CD4-positive, alpha-beta memory T cell (primary cell): ENCODE measurements at regions of chr9 and their contacts with region 1.

Region 1: GRCh38 chr9:83980395-83981125 is at the start of gene RMI1:
- DNase-seq: peak; percentile 98 to 99 (median 99)
- H3K4me3 ChIP-seq: peak within 1 kb of the TSS; percentile 90 to 99
- H3K4me3 Mint-ChIP-seq: peak within 1 kb of the TSS; percentile 94 to 100 (median 100)
- H3K27ac ChIP-seq: peak within 1 kb of the TSS; percentile 98
- H3K27ac Mint-ChIP-seq: peak within 1 kb of the TSS; percentile 98 to 100 (median 99)
- H3K4me1 ChIP-seq: peaks cover 40% of the 10 kb centered on the region
- H3K4me1 Mint-ChIP-seq: peaks cover 25 to 68% (median 36%) of the 10 kb centered on the region in 4 donors
- H3K27me3 ChIP-seq: no peaks in the 10 kb centered on the region
- H3K27me3 Mint-ChIP-seq: no peaks in the 10 kb centered on the region
- total RNA-seq, gene RMI1: 6.7 to 7.3 TPM

Region 2: DNA sequence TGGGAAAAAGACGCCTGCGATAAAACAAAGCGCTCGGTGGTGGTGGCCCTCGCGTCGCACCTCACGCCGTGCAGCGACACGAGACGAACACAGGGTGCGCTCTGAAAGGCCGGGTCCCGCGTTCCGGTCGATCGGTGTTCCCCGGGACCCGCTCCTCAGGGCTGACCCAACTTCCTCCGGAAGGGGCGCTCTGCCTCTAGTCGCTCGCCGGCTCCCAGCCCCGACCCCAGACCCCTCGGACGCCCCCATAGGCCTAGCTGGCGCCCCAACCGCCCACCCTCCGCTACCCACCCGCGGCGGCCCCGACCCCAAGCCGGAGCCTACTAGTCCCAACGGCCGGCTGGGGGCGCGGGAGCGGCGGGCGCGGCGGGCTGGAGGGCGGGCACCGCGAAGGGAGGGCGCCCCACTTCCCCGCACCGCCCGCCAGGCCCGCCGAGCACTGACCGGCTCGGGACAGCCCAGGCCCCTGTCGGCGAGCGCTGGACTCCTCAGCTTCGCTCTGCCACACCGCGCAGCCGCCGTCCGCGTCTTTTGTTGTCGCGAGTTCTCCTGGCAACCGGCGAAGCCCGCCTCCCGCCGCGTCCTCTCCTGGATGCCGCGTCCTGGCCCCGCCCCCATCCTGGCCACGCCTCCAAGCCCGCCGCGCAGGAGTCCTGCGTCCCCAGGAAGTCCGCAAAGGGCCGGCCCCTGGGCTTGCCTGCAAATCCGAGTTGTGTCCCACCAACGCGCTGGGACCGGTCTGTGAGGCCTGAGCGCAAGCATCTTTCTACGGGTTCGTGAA is 59.4 kb before region 1 on chr9 and contains the start of gene KIF27:
- CTCF ChIA-PET with region 1: interaction called, 6 read pairs
- POLR2A ChIA-PET with region 1: interaction called, 64 read pairs
- intact Hi-C with region 1: loop called (anchors 1 kb)
- DNase-seq: peak; percentile 93 to 95 (median 94)
- H3K4me3 ChIP-seq: peak within 1 kb of the TSS; percentile 20 to 67
- H3K4me3 Mint-ChIP-seq: peak within 1 kb of the TSS; percentile 90 to 95 (median 92)
- H3K27ac ChIP-seq: peak within 1 kb of the TSS; percentile 83
- H3K27ac Mint-ChIP-seq: peak within 1 kb of the TSS; percentile 84 to 98 (median 97)
- H3K4me1 ChIP-seq: peaks cover 11% of the 10 kb centered on the region
- H3K4me1 Mint-ChIP-seq: peaks cover 8 to 18% (median 10%) of the 10 kb centered on the region in 4 donors
- H3K27me3 ChIP-seq: no peaks in the 10 kb centered on the region
- H3K27me3 Mint-ChIP-seq: no peaks in the 10 kb centered on the region
- total RNA-seq, gene KIF27: 4.7 to 5.2 TPM

Region 3: GRCh38 chr9:83965350-83966208 is 15.0 kb before region 1 on chr9:
- CTCF ChIA-PET with region 1: interaction called, 8 read pairs
- POLR2A ChIA-PET with region 1: interaction called, 53 read pairs
- intact Hi-C with region 1: loop called (anchors 1 kb)
- DNase-seq: no peak
- H3K4me3 ChIP-seq: no peak overlapping the region
- H3K4me3 Mint-ChIP-seq: no peak overlapping the region
- H3K27ac ChIP-seq: no peak overlapping the region
- H3K27ac Mint-ChIP-seq: peak overlapping the region in 5 of 7 donors; percentile 4 to 84 (median 78)
- H3K4me1 ChIP-seq: peaks cover 4% of the 10 kb centered on the region
- H3K4me1 Mint-ChIP-seq: peaks cover 11 to 15% (median 14%) of the 10 kb centered on the region in 4 donors
- H3K27me3 ChIP-seq: no peaks in the 10 kb centered on the region
- H3K27me3 Mint-ChIP-seq: no peaks in the 10 kb centered on the region

Region 4: DNA sequence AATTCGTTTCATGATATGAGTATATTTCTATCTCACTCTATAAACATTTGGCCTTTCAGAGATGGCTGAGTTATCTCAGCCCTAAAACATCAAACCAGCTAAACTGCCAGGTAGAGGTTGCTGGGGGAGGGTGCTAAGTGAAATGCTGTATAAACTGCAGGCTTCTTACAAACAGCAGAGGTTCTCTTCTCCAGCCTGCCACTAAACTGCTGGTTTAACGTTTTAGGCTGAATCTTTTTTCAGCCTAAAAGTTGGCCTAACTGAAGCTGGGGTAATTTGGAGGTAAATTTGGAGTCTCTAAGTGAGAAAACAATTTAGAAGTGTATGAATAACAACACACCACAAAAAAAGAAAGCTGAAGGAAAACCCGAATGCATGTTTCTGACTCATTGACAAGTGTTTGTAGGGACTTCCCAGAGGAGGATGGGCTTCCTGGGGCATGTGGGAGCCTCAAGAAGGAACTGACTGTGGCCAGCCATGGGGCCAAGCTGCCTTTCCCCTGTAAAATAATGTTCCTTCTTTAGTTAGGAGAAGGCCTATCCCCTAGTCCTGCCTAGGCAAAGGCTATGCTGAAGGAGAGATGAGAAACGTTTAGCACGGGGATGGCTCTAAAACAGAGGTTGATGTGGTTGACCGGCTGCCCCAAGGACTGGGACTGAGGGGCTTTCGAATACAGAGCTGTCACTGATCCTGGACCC is 315.7 kb after region 1 on chr9:
- CTCF ChIA-PET with region 1: no interaction called
- POLR2A ChIA-PET with region 1: interaction called, 12 read pairs
- intact Hi-C with region 1: no loop called
- DNase-seq: peak in 4 of 5 donors; percentile 10 to 56 (median 18)
- H3K4me3 ChIP-seq: no peak overlapping the region
- H3K4me3 Mint-ChIP-seq: peak overlapping the region in 4 of 8 donors; percentile 18 to 74 (median 57)
- H3K27ac ChIP-seq: peak overlapping the region; percentile 19
- H3K27ac Mint-ChIP-seq: peak overlapping the region; percentile 51 to 92 (median 86)
- H3K4me1 ChIP-seq: peaks cover 48% of the 10 kb centered on the region
- H3K4me1 Mint-ChIP-seq: peaks cover 38 to 56% (median 45%) of the 10 kb centered on the region in 4 donors
- H3K27me3 ChIP-seq: no peaks in the 10 kb centered on the region
- H3K27me3 Mint-ChIP-seq: no peaks in the 10 kb centered on the region